Mammary epithelial cell (primary cell): ENCODE measurements at regions of chr9 and their contacts with region 1.

Region 1: DNA sequence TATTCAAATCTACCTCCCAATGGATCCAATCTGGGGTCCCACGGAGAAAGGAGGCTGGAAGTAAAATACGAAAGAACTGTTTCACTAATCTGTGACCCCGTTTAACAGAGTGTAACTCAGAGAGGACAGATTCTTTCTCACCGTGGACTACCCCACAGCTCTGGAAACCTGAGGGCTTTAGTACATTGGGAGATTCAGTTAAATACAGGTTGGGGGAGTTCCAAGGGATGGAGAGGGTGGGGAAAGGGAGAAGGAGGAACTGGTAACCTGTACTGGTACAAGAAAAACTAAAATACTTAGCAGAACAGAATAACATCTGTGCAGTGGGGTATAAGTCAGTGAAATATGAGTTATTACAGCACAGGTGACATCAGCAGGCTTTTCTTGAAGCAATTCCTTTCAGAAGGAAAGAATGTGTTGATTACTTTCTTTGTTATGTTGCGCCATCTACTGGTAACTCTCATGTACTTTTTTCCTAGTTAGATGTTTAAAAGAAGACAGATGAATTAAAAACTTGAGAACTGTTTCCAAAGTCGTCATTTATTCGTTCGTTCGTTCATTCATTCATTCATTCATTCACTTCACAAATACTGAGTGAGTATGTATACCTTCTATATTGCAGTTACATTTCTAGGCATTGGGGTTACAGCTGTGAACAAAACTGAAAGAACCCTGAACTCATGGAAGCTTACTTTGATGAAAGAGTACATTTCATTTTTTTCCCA is 30.0 kb upstream of the STOM start:
- DNase-seq: peak; percentile 69
- H3K4me3 ChIP-seq: no peak overlapping the region
- H3K27ac ChIP-seq: peak overlapping the region; percentile 81
- H3K4me1 ChIP-seq: peaks cover 26% of the 10 kb centered on the region
- H3K27me3 ChIP-seq: no peaks in the 10 kb centered on the region
- CTCF ChIP-seq: peak; percentile 37 to 49

Region 2: GRCh38 chr9:121107041-121107440 is 293.0 kb before region 1 on chr9:
- CTCF ChIA-PET with region 1: no interaction called
- dilution Hi-C with region 1: no loop called
- in situ Hi-C with region 1: no loop called
- intact Hi-C with region 1: loop called (anchors 5 kb)
- DNase-seq: peak; percentile 39
- H3K4me3 ChIP-seq: no peak overlapping the region
- H3K27ac ChIP-seq: no peak overlapping the region
- H3K4me1 ChIP-seq: no peaks in the 10 kb centered on the region
- H3K27me3 ChIP-seq: no peaks in the 10 kb centered on the region
- CTCF ChIP-seq: peak; percentile 46 to 69

Region 3: DNA sequence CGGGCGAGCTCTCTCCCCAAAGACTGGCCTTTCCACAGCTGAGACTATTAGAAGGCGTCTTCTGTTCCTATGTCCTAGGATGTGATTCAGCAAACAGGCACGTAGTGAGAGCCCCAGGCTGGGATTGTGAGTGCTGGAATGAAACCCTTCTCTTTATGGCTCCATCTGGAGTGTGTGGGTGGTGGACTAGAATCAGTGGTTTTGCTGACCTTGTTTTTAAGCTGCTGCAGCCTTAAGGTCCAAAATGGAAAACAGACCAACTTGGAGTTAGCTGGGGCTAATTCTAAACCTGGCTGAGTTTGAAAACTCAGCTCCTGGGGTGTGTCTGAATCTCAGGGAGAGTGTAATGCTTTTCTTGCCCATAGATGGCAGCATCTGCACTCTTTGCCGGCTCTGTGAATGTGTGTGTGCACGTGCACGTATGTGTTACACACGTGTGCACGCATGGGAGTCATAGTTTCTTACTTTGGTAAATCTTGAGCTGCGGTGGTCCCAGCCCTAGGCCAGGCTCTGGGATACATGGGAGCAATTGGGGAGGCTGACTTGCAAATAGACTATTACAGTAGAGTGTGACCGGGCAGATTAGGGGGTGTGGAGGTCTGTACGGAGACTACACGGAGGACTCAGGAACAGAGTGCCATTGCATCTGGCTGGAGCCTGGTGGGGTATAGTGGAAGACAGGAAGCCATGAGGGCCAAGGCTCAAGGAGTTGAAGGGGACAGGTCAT is 121.3 kb before region 1 on chr9:
- CTCF ChIA-PET with region 1: interaction called, 4 read pairs
- dilution Hi-C with region 1: loop called (anchors 5 kb)
- in situ Hi-C with region 1: no loop called
- intact Hi-C with region 1: loop called (anchors 2 kb)
- DNase-seq: peak; percentile 98
- H3K4me3 ChIP-seq: no peak overlapping the region
- H3K27ac ChIP-seq: peak overlapping the region; percentile 90
- H3K4me1 ChIP-seq: peaks cover 76% of the 10 kb centered on the region
- H3K27me3 ChIP-seq: no peaks in the 10 kb centered on the region
- CTCF ChIP-seq: peak; percentile 82 to 88

Region 4: GRCh38 chr9:121326130-121326838 is 73.8 kb before region 1 on chr9:
- CTCF ChIA-PET with region 1: no interaction called
- dilution Hi-C with region 1: loop called (anchors 10 kb)
- in situ Hi-C with region 1: loop called (anchors 5 kb)
- intact Hi-C with region 1: no loop called
- DNase-seq: peak; percentile 23
- H3K4me3 ChIP-seq: no peak overlapping the region
- H3K27ac ChIP-seq: no peak overlapping the region
- H3K4me1 ChIP-seq: peaks cover 27% of the 10 kb centered on the region
- H3K27me3 ChIP-seq: no peaks in the 10 kb centered on the region
- CTCF ChIP-seq: no peak

Region 5: GRCh38 chr9:121369595-121370265 is 30.3 kb before region 1 on chr9 and contains the start of gene STOM:
- CTCF ChIA-PET with region 1: no interaction called
- dilution Hi-C with region 1: no loop called
- in situ Hi-C with region 1: no loop called
- intact Hi-C with region 1: loop called (anchors 1 kb)
- DNase-seq: peak; percentile 76
- H3K4me3 ChIP-seq: peak within 1 kb of the TSS; percentile 38 to 73 (median 62)
- H3K27ac ChIP-seq: peak within 1 kb of the TSS; percentile 35
- H3K4me1 ChIP-seq: peaks cover 33% of the 10 kb centered on the region
- H3K27me3 ChIP-seq: no peaks in the 10 kb centered on the region
- CTCF ChIP-seq: no peak
- total RNA-seq, gene STOM: 80.3 to 124 TPM

Region 6: GRCh38 chr9:121483049-121483448 is 83.0 kb after region 1 on chr9:
- CTCF ChIA-PET with region 1: no interaction called
- dilution Hi-C with region 1: no loop called
- in situ Hi-C with region 1: no loop called
- intact Hi-C with region 1: no loop called
- DNase-seq: no peak
- H3K4me3 ChIP-seq: no peak overlapping the region
- H3K27ac ChIP-seq: no peak overlapping the region
- H3K4me1 ChIP-seq: no peaks in the 10 kb centered on the region
- H3K27me3 ChIP-seq: no peaks in the 10 kb centered on the region
- CTCF ChIP-seq: no peak

Region 7: GRCh38 chr9:121538246-121538645 is 138.2 kb after region 1 on chr9:
- CTCF ChIA-PET with region 1: no interaction called
- dilution Hi-C with region 1: no loop called
- in situ Hi-C with region 1: no loop called
- intact Hi-C with region 1: loop called (anchors 5 kb)
- DNase-seq: no peak
- H3K4me3 ChIP-seq: no peak overlapping the region
- H3K27ac ChIP-seq: no peak overlapping the region
- H3K4me1 ChIP-seq: no peaks in the 10 kb centered on the region
- H3K27me3 ChIP-seq: no peaks in the 10 kb centered on the region
- CTCF ChIP-seq: peak; percentile 13 to 47